ENCODE measurements at regions of chr10 and their contacts with region 1.

Region 1: GRCh38 chr10:123967396-123968243 is 76.0 kb upstream of the CPXM2 start:
- DNase-seq: peak; percentile 63 to 82
- H3K4me3 ChIP-seq: no peak overlapping the region
- H3K4me3 Mint-ChIP-seq: no peak overlapping the region
- H3K27ac Mint-ChIP-seq: no peak overlapping the region
- H3K4me1 ChIP-seq: no peaks in the 10 kb centered on the region
- H3K4me1 Mint-ChIP-seq: peaks cover 8% of the 10 kb centered on the region
- H3K27me3 ChIP-seq: no peaks in the 10 kb centered on the region
- H3K27me3 Mint-ChIP-seq: peaks cover 14% of the 10 kb centered on the region
- CTCF ChIP-seq: peak; percentile 92 to 95

Region 2: GRCh38 chr10:123642293-123642692 is 325.3 kb before region 1 on chr10:
- CTCF ChIA-PET with region 1: no interaction called
- POLR2A ChIA-PET with region 1: no interaction called
- intact Hi-C with region 1: loop called (anchors 1 kb)
- DNase-seq: no peak
- H3K4me3 ChIP-seq: no peak overlapping the region
- H3K4me3 Mint-ChIP-seq: no peak overlapping the region
- H3K27ac Mint-ChIP-seq: no peak overlapping the region
- H3K4me1 ChIP-seq: no peaks in the 10 kb centered on the region
- H3K4me1 Mint-ChIP-seq: no peaks in the 10 kb centered on the region
- H3K27me3 ChIP-seq: no peaks in the 10 kb centered on the region
- H3K27me3 Mint-ChIP-seq: peaks cover 16% of the 10 kb centered on the region
- CTCF ChIP-seq: no peak

Region 3: GRCh38 chr10:123848564-123849457 is 118.8 kb before region 1 on chr10:
- CTCF ChIA-PET with region 1: no interaction called
- POLR2A ChIA-PET with region 1: no interaction called
- intact Hi-C with region 1: loop called (anchors 10 kb)
- DNase-seq: no peak
- H3K4me3 ChIP-seq: no peak overlapping the region
- H3K4me3 Mint-ChIP-seq: no peak overlapping the region
- H3K27ac Mint-ChIP-seq: no peak overlapping the region
- H3K4me1 ChIP-seq: no peaks in the 10 kb centered on the region
- H3K4me1 Mint-ChIP-seq: no peaks in the 10 kb centered on the region
- H3K27me3 ChIP-seq: no peaks in the 10 kb centered on the region; the same call in 1 of the 2 replicates
- H3K27me3 Mint-ChIP-seq: peaks cover 3% of the 10 kb centered on the region
- CTCF ChIP-seq: no peak